ENCODE measurements at regions of chr9 and their contacts with region 1.

Region 1: GRCh38 chr9:34048923-34049697 is 423 bp upstream of the UBAP2 start:
- DNase-seq: peak; percentile 98
- H3K4me3 ChIP-seq: peak overlapping the region; percentile 73
- H3K27ac ChIP-seq: peak overlapping the region; percentile 100
- H3K4me1 ChIP-seq: peaks cover 16% of the 10 kb centered on the region
- H3K27me3 ChIP-seq: no peaks in the 10 kb centered on the region
- CTCF ChIP-seq: no peak

Region 2: DNA sequence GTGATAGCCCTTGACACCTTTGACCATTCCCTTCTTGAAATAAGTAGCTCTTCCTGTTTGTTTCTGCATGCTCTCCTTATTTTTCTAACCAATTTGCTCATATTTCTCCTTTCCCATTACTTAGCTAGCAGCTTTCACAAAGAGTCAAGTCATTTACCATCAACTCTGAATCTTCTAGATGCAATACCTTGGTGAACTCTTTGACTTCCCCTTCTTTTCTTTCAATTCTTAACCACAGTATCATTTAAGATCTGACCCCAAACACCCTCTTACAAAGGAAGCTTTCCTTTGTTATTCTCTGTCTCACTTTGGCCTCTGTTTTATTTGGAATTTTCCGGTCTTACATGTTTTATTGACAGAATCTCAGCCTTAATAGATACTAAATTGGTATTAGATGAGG is 744.7 kb before region 1 on chr9:
- CTCF ChIA-PET with region 1: no interaction called
- POLR2A ChIA-PET with region 1: interaction called, 10 read pairs
- intact Hi-C with region 1: no loop called
- DNase-seq: no peak
- H3K4me3 ChIP-seq: no peak overlapping the region
- H3K27ac ChIP-seq: no peak overlapping the region
- H3K4me1 ChIP-seq: no peaks in the 10 kb centered on the region
- H3K27me3 ChIP-seq: no peaks in the 10 kb centered on the region
- CTCF ChIP-seq: no peak